A673 (cell line): ENCODE measurements at regions of chr16 and their contacts with region 1.

Region 1: GRCh38 chr16:89890886-89891657 is 17.7 kb downstream of the TCF25 start:
- DNase-seq: no peak
- H3K4me3 ChIP-seq: no peak overlapping the region
- H3K27ac ChIP-seq: no peak overlapping the region
- H3K4me1 ChIP-seq: no peaks in the 10 kb centered on the region
- H3K27me3 ChIP-seq: no peaks in the 10 kb centered on the region
- CTCF ChIP-seq: no peak

Region 2: GRCh38 chr16:89842471-89843408 is 48.3 kb before region 1 on chr16:
- CTCF ChIA-PET with region 1: no interaction called
- POLR2A ChIA-PET with region 1: no interaction called
- intact Hi-C with region 1: no loop called
- DNase-seq: peak; percentile 83
- H3K4me3 ChIP-seq: no peak overlapping the region
- H3K27ac ChIP-seq: no peak overlapping the region
- H3K4me1 ChIP-seq: peaks cover 10% of the 10 kb centered on the region
- H3K27me3 ChIP-seq: no peaks in the 10 kb centered on the region
- CTCF ChIP-seq: no peak

Region 3: GRCh38 chr16:89873972-89874689 is 16.9 kb before region 1 on chr16:
- CTCF ChIA-PET with region 1: interaction called, 11 read pairs
- POLR2A ChIA-PET with region 1: interaction called, 6 read pairs
- intact Hi-C with region 1: no loop called
- DNase-seq: peak; percentile 94
- H3K4me3 ChIP-seq: peak overlapping the region; percentile 75
- H3K27ac ChIP-seq: peak overlapping the region; percentile 99
- H3K4me1 ChIP-seq: peaks cover 7% of the 10 kb centered on the region
- H3K27me3 ChIP-seq: no peaks in the 10 kb centered on the region
- CTCF ChIP-seq: no peak